Cardiac septum (tissue), 1 donor: ENCODE measurements at regions of chr1 and their contacts with region 1.

Region 1: GRCh38 chr1:241640029-241640818 is at the starts of genes CHML and OPN3:
- DNase-seq: peak; percentile 97
- total RNA-seq, gene CHML: 5.7 TPM
- total RNA-seq, gene OPN3: 5.7 TPM

Region 2: GRCh38 chr1:241269116-241269515 is 371.1 kb before region 1 on chr1:
- intact Hi-C with region 1: no loop called
- DNase-seq: no peak

Region 3: DNA sequence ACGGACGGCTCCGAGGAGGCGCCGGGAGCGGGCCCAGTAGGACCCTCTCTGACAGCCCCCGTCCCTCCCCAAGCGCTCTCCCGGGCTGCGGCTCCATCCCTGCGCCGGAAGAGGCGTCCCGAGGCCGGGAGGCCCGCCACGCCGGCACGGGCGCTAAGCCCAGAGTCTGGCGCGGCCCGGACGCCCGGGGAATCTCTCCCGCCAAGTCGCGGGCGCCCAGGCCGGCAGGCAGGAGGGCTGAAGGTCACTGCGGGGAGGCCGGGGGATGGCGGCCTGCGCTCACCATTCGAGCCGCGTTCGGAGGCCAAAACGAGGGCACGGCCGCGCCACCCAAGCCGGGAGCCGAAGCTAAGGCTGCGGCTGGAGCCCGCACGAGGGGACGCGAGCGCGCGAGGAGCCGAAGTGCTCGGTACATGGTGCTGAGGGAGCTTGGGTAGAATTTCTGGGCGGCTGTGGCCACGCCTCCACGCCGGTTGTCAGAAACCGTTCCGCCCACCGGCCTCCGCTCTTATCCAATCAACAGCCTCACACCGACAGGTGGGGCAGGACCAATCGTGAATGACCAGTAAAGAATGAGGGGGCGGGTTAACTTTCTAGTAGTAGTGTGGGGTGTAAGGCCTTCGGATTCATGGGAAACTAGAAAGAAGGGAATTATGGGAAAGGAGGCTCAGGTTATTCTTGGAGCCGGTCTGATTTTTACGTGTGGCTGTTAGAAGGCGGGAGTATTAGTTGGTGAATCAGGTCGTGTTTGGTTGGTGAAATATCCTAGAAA is 120.7 kb before region 1 on chr1 and contains the start of gene FH:
- intact Hi-C with region 1: loop called (anchors 5 kb)
- DNase-seq: peak; percentile 98
- total RNA-seq, gene FH: 192 TPM

Region 4: DNA sequence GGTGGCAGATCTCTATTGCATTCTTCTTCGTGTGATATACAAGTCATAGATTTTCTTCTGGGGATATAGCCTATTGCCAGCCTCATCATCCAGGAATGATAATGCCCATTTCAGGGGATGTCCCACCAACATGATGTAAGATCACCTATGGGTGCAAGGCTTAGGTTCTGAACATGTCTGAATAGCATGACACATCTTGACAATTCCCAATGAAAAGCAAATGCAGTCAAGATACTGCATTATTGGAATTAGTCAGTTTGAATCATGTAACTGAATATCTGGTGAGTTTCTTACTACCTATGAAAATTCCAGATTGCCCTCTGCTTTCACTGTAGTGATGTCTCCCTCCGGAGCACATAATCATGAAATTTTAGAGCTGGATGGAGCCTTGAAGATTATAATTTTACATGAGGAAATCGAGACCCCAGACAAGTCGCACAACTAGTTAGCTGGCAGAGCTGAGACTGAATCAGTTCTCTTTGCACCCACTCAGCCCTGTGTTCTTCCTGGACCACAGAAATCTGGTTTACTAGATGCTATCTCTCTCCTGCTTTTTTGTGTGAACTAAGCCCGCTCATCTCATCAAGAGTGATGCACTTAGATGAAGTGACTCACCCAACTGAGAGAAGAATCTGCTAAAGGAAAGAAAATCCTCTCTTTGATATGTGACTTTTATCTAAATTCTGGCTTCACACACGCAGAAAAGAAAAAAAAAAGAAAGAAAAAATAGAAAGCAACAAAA is 76.9 kb after region 1 on chr1:
- intact Hi-C with region 1: no loop called
- DNase-seq: no peak